ENCODE measurements at regions of chr9 and their contacts with region 1.

Region 1: GRCh38 chr9:20941174-20941690 is 90.2 kb downstream of the HACD4 start:
- DNase-seq: no peak
- H3K4me3 ChIP-seq: no peak overlapping the region
- CTCF ChIP-seq: peak; percentile 72

Region 2: GRCh38 chr9:20356403-20357035 is 584.7 kb before region 1 on chr9:
- CTCF ChIA-PET with region 1: interaction called, 55 read pairs
- POLR2A ChIA-PET with region 1: no interaction called
- DNase-seq: peak; percentile 53
- H3K4me3 ChIP-seq: no peak overlapping the region
- CTCF ChIP-seq: peak; percentile 70

Region 3: GRCh38 chr9:20622330-20623020 is 318.8 kb before region 1 on chr9 and contains the start of gene MLLT3:
- CTCF ChIA-PET with region 1: interaction called, 184 read pairs
- POLR2A ChIA-PET with region 1: no interaction called
- DNase-seq: peak; percentile 72
- H3K4me3 ChIP-seq: peak within 1 kb of the TSS; percentile 81
- CTCF ChIP-seq: no peak

Region 4: GRCh38 chr9:20929276-20929675 is 12.0 kb before region 1 on chr9:
- CTCF ChIA-PET with region 1: interaction called, 42 read pairs
- POLR2A ChIA-PET with region 1: no interaction called
- DNase-seq: no peak
- H3K4me3 ChIP-seq: no peak overlapping the region
- CTCF ChIP-seq: no peak

Region 5: GRCh38 chr9:21110708-21111576 is 169.7 kb after region 1 on chr9:
- CTCF ChIA-PET with region 1: interaction called, 66 read pairs
- POLR2A ChIA-PET with region 1: no interaction called
- DNase-seq: peak; percentile 37
- H3K4me3 ChIP-seq: no peak overlapping the region
- CTCF ChIP-seq: peak; percentile 73

Measured in AG04449 (cell line).